ENCODE measurements at regions of chr17 and their contacts with region 1.

Region 1: DNA sequence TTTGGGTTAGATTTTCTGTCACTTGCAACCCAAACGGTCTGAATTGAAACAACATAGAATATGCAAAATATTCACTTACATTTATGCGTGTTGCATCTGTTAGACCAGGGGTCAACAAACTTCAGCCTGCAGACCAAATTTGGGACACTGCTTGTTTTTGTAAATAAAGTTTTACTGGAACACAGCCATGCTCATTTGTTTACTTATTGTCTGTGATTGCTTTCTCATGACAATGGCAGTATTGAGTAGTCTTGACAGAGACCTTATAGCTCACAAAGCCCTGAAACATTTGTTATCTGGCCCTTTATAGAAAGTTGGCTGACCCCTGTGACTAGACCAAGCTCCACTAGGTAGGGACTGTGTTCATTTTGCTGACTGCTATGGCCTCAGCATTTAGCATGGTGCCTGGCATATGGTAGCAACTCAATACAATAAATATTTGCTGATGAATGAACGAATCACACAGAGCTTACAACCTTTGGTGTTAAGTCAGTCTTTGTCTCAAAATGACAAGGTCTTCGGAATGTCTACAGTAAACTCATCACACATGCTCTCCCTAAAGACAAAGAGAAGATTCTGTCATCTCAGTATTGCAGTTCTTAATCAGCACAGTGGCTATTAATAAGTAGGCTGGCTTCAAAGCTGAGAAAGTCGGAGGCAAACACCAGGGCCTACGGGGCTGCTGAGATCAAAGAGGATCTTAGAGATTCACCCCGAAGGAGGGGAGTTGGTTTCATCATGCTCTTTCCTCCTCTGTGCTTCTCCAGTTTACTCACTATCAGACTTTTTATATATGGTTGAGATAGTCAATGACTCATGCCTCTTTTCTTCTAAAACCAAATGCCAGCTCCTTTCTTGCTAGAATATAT is 95.2 kb upstream of the AXIN2 start:
- DNase-seq: peak; percentile 84
- H3K4me3 Mint-ChIP-seq: no peak overlapping the region
- H3K27ac Mint-ChIP-seq: peak overlapping the region; percentile 56
- H3K4me1 Mint-ChIP-seq: peaks cover 35% of the 10 kb centered on the region
- H3K27me3 Mint-ChIP-seq: peaks cover 9% of the 10 kb centered on the region

Region 2: GRCh38 chr17:64975329-64976087 is 681.1 kb before region 1 on chr17:
- CTCF ChIA-PET with region 1: no interaction called
- intact Hi-C with region 1: loop called (anchors 2 kb)
- DNase-seq: peak; percentile 94
- H3K4me3 Mint-ChIP-seq: peak overlapping the region; percentile 90
- H3K27ac Mint-ChIP-seq: peak overlapping the region; percentile 91
- H3K4me1 Mint-ChIP-seq: peaks cover 45% of the 10 kb centered on the region
- H3K27me3 Mint-ChIP-seq: no peaks in the 10 kb centered on the region

Region 3: DNA sequence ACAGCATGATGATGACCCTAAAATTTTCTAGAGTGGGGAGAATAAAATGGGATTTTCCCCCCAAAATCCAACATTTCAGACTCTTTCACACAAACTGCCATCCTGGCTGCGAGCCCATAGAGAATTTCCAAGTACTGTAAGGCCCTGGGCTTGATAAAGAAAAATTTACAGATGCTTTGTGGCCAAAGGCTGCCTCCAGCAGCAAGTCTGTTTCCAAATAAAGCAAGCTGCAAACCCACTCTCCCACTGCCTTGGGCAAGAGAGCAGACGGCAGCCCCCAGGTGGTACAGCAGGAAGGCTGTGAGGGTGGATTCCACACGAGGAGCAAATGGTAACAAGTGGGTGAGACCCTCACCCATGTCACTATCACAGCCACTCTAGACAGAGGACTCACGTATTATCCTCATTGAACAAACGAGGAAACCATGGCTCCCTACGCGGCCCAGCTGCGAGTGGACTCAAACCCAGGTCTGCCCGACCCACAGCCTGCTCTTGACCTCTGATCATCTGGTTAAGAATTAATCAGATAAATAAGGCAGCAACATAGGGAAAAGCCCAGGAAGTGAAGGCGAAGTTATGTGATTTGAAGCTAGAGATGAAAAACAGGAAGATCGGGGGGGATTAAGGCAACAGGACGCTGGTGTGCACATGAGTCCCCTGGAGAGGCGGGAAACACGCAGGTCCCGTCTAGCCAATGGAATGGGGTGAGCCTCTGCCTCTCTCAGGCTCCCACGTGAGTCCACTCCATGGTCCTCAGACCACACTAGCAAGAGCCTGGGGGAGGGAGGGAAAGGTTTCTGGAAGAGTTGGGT is 132.6 kb before region 1 on chr17:
- CTCF ChIA-PET with region 1: no interaction called
- intact Hi-C with region 1: loop called (anchors 1 kb)
- DNase-seq: no peak
- H3K4me3 Mint-ChIP-seq: no peak overlapping the region
- H3K27ac Mint-ChIP-seq: peak overlapping the region; percentile 24
- H3K4me1 Mint-ChIP-seq: peaks cover 29% of the 10 kb centered on the region
- H3K27me3 Mint-ChIP-seq: no peaks in the 10 kb centered on the region

Region 4: GRCh38 chr17:65666876-65667321 is 10.3 kb after region 1 on chr17:
- CTCF ChIA-PET with region 1: no interaction called
- intact Hi-C with region 1: no loop called
- DNase-seq: no peak
- H3K4me3 Mint-ChIP-seq: no peak overlapping the region
- H3K27ac Mint-ChIP-seq: no peak overlapping the region
- H3K4me1 Mint-ChIP-seq: no peaks in the 10 kb centered on the region
- H3K27me3 Mint-ChIP-seq: no peaks in the 10 kb centered on the region

Region 5: GRCh38 chr17:65742403-65743307 is 86.0 kb after region 1 on chr17:
- CTCF ChIA-PET with region 1: no interaction called
- intact Hi-C with region 1: loop called (anchors 2 kb)
- DNase-seq: peak; percentile 14
- H3K4me3 Mint-ChIP-seq: no peak overlapping the region
- H3K27ac Mint-ChIP-seq: peak overlapping the region; percentile 39
- H3K4me1 Mint-ChIP-seq: peaks cover 22% of the 10 kb centered on the region
- H3K27me3 Mint-ChIP-seq: no peaks in the 10 kb centered on the region

Region 6: DNA sequence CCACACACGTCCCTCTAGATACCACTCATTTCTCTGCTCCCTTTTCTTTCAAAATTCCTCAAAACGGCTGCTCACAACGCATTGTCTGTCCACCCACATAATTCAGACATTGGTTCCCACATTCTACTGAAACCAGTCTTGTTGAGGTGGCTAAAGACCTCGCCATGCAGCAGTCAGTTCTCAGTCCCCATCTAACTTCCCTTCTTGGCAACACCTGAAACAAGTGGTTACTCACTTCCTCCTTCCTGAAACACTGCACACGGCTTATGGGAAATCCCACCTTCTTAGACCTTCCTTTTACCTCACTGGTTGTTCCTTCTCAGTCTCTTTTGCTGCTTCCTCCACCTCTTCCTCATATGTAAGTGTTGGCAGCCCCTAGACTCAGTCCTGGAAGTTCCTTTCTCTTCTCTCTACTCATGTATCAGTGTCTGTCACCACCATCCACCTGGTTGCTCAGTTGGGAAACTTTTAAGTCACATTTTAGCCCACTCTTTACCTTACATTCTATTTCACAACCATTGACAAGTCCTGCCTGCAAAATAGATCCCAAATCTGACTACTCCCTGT is 258.3 kb after region 1 on chr17:
- CTCF ChIA-PET with region 1: no interaction called
- intact Hi-C with region 1: loop called (anchors 1 kb)
- DNase-seq: peak; percentile 72
- H3K4me3 Mint-ChIP-seq: no peak overlapping the region
- H3K27ac Mint-ChIP-seq: peak overlapping the region; percentile 71
- H3K4me1 Mint-ChIP-seq: peaks cover 17% of the 10 kb centered on the region
- H3K27me3 Mint-ChIP-seq: no peaks in the 10 kb centered on the region

Measured in activated naive CD4-positive, alpha-beta T cell treated with anti-CD3 and anti-CD28 coated beads for 36 hours (primary cell).